Mammary epithelial cell (primary cell): ENCODE measurements at regions of chr14 and their contacts with region 1.

Region 1: GRCh38 chr14:69657950-69658355 is 46.6 kb downstream of the SUSD6 start:
- DNase-seq: peak; percentile 93
- H3K4me3 ChIP-seq: peak overlapping the region; percentile 13 to 24 (median 17)
- H3K27ac ChIP-seq: peak overlapping the region; percentile 80
- H3K4me1 ChIP-seq: peaks cover 62% of the 10 kb centered on the region
- H3K27me3 ChIP-seq: no peaks in the 10 kb centered on the region
- CTCF ChIP-seq: no peak

Region 2: DNA sequence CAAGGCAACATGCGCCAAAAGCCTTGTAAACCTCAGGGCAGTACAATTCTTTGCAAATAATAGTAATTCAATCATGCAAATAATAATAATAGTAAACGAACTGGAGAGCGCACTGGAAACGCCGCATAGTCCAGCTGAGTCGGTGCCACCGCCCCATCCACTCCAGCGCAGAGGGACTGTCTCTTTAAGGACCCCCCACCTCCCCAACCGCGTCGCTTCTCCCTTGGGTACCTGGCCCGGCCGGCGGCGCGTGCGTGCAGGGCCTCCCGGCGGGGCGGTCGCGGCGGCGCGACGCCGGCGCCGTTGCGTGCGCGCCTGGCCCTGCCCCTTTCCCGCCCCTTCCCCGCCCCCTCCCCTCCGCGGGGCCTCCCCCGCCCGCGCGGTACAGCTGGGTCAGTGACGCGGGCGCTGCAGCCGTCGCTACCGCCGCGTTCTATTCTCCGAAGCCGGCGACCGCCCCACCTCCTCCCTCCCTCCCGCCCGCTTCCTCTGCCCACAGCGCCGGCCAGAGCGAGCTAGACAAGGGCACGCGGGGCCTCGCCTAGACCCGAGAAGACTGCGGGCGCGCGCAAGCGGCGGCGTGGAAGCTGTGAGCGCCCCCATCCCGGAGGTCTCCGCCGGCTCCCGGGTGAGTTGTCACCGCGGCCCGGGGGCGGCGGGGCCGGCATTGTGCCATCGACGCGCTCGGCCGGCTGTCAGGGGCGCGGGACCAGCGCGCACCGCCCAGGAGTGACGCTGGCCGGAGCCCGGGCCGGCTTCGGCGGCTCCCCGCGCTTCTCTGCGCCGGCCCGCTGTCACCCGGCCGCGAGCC is 46.5 kb before region 1 on chr14 and contains the start of gene SUSD6:
- CTCF ChIA-PET with region 1: no interaction called
- dilution Hi-C with region 1: no loop called
- in situ Hi-C with region 1: no loop called
- intact Hi-C with region 1: loop called (anchors 1 kb)
- DNase-seq: peak; percentile 83
- H3K4me3 ChIP-seq: peak within 1 kb of the TSS; percentile 78 to 82 (median 79)
- H3K27ac ChIP-seq: peak within 1 kb of the TSS; percentile 93
- H3K4me1 ChIP-seq: peaks cover 39% of the 10 kb centered on the region
- H3K27me3 ChIP-seq: no peaks in the 10 kb centered on the region
- CTCF ChIP-seq: no peak
- total RNA-seq, gene SUSD6: 34.8 to 45.6 TPM

Region 3: GRCh38 chr14:69643443-69644164 is 14.3 kb before region 1 on chr14:
- CTCF ChIA-PET with region 1: no interaction called
- dilution Hi-C with region 1: no loop called
- in situ Hi-C with region 1: no loop called
- intact Hi-C with region 1: loop called (anchors 2 kb)
- DNase-seq: peak; percentile 98
- H3K4me3 ChIP-seq: no peak overlapping the region
- H3K27ac ChIP-seq: peak overlapping the region; percentile 70
- H3K4me1 ChIP-seq: peaks cover 40% of the 10 kb centered on the region
- H3K27me3 ChIP-seq: no peaks in the 10 kb centered on the region
- CTCF ChIP-seq: no peak

Region 4: DNA sequence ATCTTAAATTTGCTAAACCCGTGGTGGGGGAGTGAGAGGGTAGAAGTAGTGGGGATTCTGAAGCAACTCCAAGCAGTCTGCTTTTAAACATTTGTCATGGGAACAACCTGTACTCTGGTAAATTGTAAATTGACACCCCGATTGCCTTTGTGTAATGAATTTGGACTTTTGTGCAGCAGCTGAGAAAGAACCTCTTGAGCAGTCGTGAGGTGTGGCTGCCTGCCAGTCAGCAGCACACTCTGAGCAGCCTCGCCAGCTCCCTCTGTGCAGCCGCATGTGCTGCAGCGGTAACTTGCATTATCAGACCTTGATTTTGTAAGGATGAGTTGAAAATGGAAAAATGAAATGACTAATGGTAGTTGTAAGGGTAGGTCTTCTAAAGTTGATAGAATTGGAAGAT is 27.8 kb after region 1 on chr14:
- CTCF ChIA-PET with region 1: no interaction called
- dilution Hi-C with region 1: no loop called
- in situ Hi-C with region 1: no loop called
- intact Hi-C with region 1: loop called (anchors 1 kb)
- DNase-seq: peak; percentile 77
- H3K4me3 ChIP-seq: peak overlapping the region; percentile 1 to 17 (median 10)
- H3K27ac ChIP-seq: peak overlapping the region; percentile 94
- H3K4me1 ChIP-seq: peaks cover 45% of the 10 kb centered on the region
- H3K27me3 ChIP-seq: no peaks in the 10 kb centered on the region
- CTCF ChIP-seq: peak in 1 of 2 donors; percentile 20

Region 5: DNA sequence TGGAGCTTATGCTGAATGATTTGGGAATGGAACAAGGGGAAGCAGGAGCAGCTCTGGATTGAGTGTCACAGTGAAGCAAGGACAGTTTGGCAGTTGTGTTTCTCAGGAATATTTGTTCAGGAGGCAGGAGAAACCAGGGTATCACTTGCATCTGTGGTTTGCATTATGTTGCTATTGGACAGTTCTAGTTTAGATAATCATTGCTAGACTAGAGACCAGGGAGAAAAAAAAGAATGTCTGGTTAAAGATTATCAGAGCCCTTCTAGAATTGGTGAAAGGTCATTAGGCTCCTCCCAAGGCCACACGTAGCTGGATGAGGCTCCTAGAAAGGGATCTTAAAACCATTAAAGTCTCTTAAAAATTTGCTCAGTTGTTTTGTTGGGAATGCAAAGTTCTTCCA is 92.0 kb after region 1 on chr14:
- CTCF ChIA-PET with region 1: no interaction called
- dilution Hi-C with region 1: no loop called
- in situ Hi-C with region 1: no loop called
- intact Hi-C with region 1: no loop called
- DNase-seq: no peak
- H3K4me3 ChIP-seq: no peak overlapping the region
- H3K27ac ChIP-seq: no peak overlapping the region
- H3K4me1 ChIP-seq: no peaks in the 10 kb centered on the region
- H3K27me3 ChIP-seq: no peaks in the 10 kb centered on the region
- CTCF ChIP-seq: no peak

Region 6: GRCh38 chr14:69796797-69797500 is 139.0 kb after region 1 on chr14 and contains the start of gene SLC10A1:
- CTCF ChIA-PET with region 1: no interaction called
- dilution Hi-C with region 1: no loop called
- in situ Hi-C with region 1: no loop called
- intact Hi-C with region 1: no loop called
- DNase-seq: no peak
- H3K4me3 ChIP-seq: no peak within 1 kb of the TSS
- H3K27ac ChIP-seq: no peak within 1 kb of the TSS
- H3K4me1 ChIP-seq: no peaks in the 10 kb centered on the region
- H3K27me3 ChIP-seq: no peaks in the 10 kb centered on the region
- CTCF ChIP-seq: no peak
- total RNA-seq, gene SLC10A1: not detected